ENCODE measurements at regions of chr17 and their contacts with region 1.

Region 1: DNA sequence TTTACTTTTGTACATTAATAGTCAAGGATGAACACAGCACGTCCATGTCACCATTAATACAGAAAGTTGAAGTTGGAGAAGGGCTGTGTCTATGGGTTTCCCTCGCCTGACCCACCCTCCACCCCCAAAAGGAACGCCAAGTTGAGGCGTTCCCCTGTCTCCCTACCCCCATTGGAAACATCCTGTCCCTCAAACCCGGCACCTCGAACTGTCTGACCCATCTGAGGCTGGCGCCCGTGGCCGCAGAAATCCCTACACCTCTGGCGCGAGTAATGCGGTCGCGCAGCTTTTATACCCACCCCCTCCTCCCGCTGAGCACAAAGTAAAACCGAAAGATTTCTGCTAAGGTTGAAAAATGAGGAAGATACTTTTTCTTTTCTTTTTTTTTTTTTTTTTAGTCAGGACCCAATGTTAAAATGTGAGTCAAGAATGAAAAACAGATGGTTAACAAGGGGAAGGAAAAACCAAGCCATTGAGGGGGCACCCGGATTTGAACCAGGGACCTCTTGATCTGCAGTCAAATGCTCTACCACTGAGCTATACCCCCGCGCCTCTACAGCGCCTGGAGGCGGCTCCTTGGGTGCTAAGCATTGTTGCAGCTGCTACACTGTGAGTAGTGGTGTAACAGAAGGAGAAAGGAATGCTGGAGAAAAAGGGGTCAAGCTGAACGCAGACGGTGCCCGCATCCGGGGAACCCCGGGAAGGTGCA is 887 bp upstream of the LASP1 start:
- DNase-seq: peak; percentile 80 to 97
- H3K4me3 ChIP-seq: peak overlapping the region; percentile 86 to 97
- H3K27ac ChIP-seq: peak overlapping the region; percentile 94 to 96
- H3K4me1 ChIP-seq: peaks cover 16 to 33% of the 10 kb centered on the region in 2 donors
- H3K27me3 ChIP-seq: no peaks in the 10 kb centered on the region
- CTCF ChIP-seq: peak in 2 of 3 experiments; percentile 22 to 28

Region 2: DNA sequence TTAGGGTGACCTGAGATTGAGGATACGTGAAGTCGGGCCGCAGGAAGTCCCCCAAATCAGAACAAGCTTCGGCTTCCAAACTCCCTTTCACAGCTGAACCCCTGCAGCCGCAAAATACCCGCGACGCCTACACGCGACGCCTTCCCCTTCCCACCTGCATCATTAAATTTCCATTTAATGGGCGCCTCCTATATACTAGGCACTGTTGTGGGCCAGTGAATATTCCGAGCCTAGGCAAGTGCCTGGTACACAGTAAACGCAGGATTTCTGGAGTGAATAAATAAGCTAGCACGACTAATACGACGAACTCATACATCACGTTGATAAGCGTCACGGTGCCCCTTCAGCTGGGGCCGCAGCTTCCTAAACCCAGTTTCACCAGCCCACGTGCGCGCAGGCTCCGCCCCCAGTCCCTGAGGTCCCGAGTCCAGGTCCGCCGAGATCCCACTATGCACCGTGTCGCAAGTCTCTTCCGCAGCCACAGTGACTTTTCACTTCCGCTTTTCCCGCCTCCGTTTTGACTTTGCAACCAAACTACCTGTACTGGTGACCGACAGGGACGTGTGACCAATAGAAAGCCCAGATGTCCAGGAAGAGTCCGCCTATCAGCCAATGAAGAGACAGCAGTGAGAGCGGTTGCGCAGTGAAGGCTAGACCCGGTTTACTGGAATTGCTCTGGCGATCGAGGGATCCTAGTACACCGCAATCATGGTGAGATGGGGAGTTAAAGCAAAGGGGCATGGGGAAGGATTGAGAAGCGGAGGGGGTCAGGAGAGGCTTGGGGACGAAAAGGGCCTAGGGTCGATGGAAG is 116.6 kb before region 1 on chr17 and contains the start of gene PSMB3:
- intact Hi-C with region 1: loop called (anchors 2 kb)
- DNase-seq: peak; percentile 97 to 100
- H3K4me3 ChIP-seq: peak within 1 kb of the TSS; percentile 79 to 93
- H3K27ac ChIP-seq: peak within 1 kb of the TSS; percentile 86 to 89
- H3K4me1 ChIP-seq: peaks cover 0 to 29% of the 10 kb centered on the region in 2 donors
- H3K27me3 ChIP-seq: no peaks in the 10 kb centered on the region
- CTCF ChIP-seq: no peak
- total RNA-seq, gene PSMB3: 189 TPM

Region 3: DNA sequence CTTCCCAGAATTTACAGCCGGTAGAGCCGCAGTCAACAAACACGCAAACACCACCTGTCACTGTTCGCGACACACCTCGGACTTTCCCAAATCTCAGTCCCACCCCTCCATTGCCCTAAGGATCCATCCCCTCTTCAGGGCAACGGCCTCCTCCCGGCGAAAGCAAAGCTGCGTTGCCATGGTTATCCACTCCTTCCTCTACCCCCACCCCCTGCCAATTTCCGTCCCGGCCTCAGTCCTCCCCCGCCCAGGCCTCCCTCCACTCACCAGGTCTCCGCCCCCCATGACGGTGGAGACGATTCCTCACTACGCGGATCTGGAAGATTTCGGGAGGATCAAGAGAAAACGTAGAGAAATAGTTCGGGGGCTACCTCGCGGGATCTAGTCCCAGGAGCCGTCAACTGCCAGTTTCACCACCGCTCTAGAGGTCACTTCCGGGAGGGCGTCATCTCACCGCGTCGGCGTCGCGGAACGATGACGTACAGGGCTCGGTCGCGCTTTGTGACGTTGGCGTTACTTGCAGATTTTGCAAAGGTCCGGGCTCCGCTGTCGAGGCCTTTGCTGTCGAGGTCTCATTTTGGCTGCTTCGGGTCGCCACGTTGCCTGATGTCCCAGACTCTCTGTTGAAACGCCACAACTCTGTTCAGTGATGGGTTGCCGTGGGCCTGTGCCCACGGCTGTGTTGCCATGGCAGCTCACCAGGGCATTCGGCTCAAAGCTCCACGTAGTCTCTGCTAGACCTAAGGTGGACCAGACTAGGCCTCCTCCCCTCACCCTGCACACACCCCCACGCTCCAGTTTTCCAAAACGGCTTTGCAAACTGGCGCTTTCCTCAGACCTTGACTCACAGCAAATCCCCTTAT is 43.8 kb before region 1 on chr17 and contains the start of gene CWC25:
- intact Hi-C with region 1: loop called (anchors 1 kb)
- DNase-seq: peak; percentile 84 to 98
- H3K4me3 ChIP-seq: peak within 1 kb of the TSS; percentile 81 to 82
- H3K27ac ChIP-seq: peak within 1 kb of the TSS; percentile 93 to 99
- H3K4me1 ChIP-seq: peaks cover 12 to 14% of the 10 kb centered on the region in 2 donors
- H3K27me3 ChIP-seq: no peaks in the 10 kb centered on the region
- CTCF ChIP-seq: no peak
- total RNA-seq, gene CWC25: 65.2 TPM

Region 4: DNA sequence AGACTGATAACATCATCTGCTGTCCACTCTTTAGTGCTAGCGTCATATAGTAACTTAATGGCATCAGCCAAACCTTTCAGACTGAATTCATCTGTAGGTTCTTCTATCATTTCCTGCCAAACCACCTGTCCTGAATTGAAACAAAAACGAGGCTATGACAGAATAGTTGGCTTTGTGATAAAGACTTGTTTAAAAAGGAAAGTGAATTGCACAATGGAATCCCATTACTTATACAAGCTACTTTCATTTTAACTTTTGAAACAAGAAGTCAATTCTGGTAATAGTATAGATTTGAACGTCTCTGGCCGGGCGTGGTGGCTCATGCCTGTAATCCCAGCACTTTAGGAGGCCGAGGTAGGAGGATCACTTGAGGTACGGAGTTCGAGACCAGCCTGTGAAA is 74.6 kb after region 1 on chr17:
- intact Hi-C with region 1: no loop called
- DNase-seq: no peak
- H3K4me3 ChIP-seq: no peak overlapping the region
- H3K27ac ChIP-seq: no peak overlapping the region
- H3K4me1 ChIP-seq: no peaks in the 10 kb centered on the region
- H3K27me3 ChIP-seq: no peaks in the 10 kb centered on the region
- CTCF ChIP-seq: no peak

Region 5: GRCh38 chr17:38982858-38983746 is 114.1 kb after region 1 on chr17:
- intact Hi-C with region 1: loop called (anchors 2 kb)
- DNase-seq: peak in 1 of 2 donors; percentile 71
- H3K4me3 ChIP-seq: no peak overlapping the region
- H3K27ac ChIP-seq: no peak overlapping the region
- H3K4me1 ChIP-seq: peaks cover 0 to 5% of the 10 kb centered on the region in 2 donors
- H3K27me3 ChIP-seq: no peaks in the 10 kb centered on the region
- CTCF ChIP-seq: peak; percentile 70 to 79 (median 73)

Region 6: GRCh38 chr17:39927101-39927928 is 1058.3 kb after region 1 on chr17 and contains the starts of genes LRRC3C and ORMDL3:
- intact Hi-C with region 1: loop called (anchors 5 kb)
- DNase-seq: peak; percentile 67 to 95
- H3K4me3 ChIP-seq: peak within 1 kb of the TSS; percentile 95 to 100
- H3K27ac ChIP-seq: peak within 1 kb of the TSS; percentile 98 to 99
- H3K4me1 ChIP-seq: peaks cover 14 to 32% of the 10 kb centered on the region in 2 donors
- H3K27me3 ChIP-seq: no peaks in the 10 kb centered on the region
- CTCF ChIP-seq: no peak
- total RNA-seq, gene LRRC3C: not detected
- total RNA-seq, gene ORMDL3: 32.2 TPM